ENCODE measurements at regions of chr18 and their contacts with region 1.

Region 1: GRCh38 chr18:21479721-21480120 is 120.8 kb downstream of the ESCO1 start:
- DNase-seq: no peak
- H3K4me3 ChIP-seq: no peak overlapping the region
- H3K4me3 Mint-ChIP-seq: no peak overlapping the region
- H3K27ac ChIP-seq: no peak overlapping the region
- H3K27ac Mint-ChIP-seq: no peak overlapping the region
- H3K4me1 ChIP-seq: no peaks in the 10 kb centered on the region
- H3K4me1 Mint-ChIP-seq: no peaks in the 10 kb centered on the region
- H3K27me3 ChIP-seq: no peaks in the 10 kb centered on the region
- H3K27me3 Mint-ChIP-seq: peaks cover 14 to 15% of the 10 kb centered on the region in 2 donors

Region 2: DNA sequence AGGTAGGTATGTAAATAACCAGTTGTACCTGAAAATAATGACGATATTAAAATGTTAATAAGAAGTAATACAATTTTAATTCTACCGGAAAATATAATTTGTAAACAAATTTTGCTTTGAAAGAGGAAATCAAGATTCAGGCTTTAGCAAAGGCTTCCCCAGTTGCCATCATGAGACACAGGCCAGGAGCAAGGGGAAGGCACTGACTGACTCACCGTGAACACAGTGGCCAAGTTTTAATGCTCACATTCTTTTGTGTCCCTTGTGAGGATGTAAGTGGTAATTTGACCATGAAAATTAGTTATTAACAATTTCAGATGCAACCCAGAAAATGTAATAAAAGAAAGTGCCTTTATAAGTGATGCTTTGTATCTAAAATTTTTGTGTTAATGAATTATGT is 73.6 kb before region 1 on chr18:
- CTCF ChIA-PET with region 1: no interaction called
- POLR2A ChIA-PET with region 1: no interaction called
- intact Hi-C with region 1: loop called (anchors 10 kb)
- DNase-seq: no peak
- H3K4me3 ChIP-seq: no peak overlapping the region
- H3K4me3 Mint-ChIP-seq: no peak overlapping the region
- H3K27ac ChIP-seq: no peak overlapping the region
- H3K27ac Mint-ChIP-seq: no peak overlapping the region
- H3K4me1 ChIP-seq: no peaks in the 10 kb centered on the region
- H3K4me1 Mint-ChIP-seq: no peaks in the 10 kb centered on the region
- H3K27me3 ChIP-seq: no peaks in the 10 kb centered on the region
- H3K27me3 Mint-ChIP-seq: peaks cover 0 to 4% of the 10 kb centered on the region in 2 donors

Region 3: GRCh38 chr18:21433436-21433835 is 46.3 kb before region 1 on chr18:
- CTCF ChIA-PET with region 1: no interaction called
- POLR2A ChIA-PET with region 1: no interaction called
- intact Hi-C with region 1: no loop called
- DNase-seq: no peak
- H3K4me3 ChIP-seq: no peak overlapping the region
- H3K4me3 Mint-ChIP-seq: no peak overlapping the region
- H3K27ac ChIP-seq: no peak overlapping the region
- H3K27ac Mint-ChIP-seq: no peak overlapping the region
- H3K4me1 ChIP-seq: no peaks in the 10 kb centered on the region
- H3K4me1 Mint-ChIP-seq: no peaks in the 10 kb centered on the region
- H3K27me3 ChIP-seq: no peaks in the 10 kb centered on the region
- H3K27me3 Mint-ChIP-seq: peaks cover 4 to 15% of the 10 kb centered on the region in 2 donors

Measured in CD4-positive, alpha-beta memory T cell (primary cell).